ENCODE measurements at regions of chr7 and their contacts with region 1.

Region 1: DNA sequence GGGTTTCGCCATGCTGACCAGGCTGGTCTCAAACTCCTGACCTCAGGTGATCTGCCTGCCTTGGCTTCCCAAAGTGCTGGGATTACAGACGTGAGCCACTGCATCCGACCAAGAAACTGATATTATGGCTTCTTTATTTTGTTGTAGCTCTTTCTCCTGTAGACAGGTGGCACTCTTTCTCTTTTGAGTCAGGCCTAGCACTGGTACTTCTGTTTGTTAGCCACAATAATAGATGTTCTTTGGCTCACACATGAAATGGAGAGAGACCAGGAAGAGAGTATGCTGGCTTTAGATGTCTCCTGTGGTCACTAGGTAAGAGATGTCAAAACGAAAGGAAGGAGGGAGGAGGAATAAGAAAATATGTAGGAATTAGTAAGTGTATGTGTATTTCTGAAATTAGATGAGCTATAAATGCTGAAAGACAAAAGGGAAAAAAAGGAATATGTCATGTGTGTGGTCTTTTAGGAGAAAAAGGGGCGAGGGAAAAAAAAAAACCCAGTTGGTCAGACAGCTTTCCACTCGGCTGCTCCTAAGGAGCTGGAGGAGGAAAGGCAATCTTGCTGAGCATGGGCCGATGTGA is 78.7 kb downstream of the CLEC2L start:
- DNase-seq: no peak
- H3K4me3 Mint-ChIP-seq: no peak overlapping the region
- H3K27ac Mint-ChIP-seq: no peak overlapping the region
- H3K4me1 Mint-ChIP-seq: no peaks in the 10 kb centered on the region
- H3K27me3 Mint-ChIP-seq: no peaks in the 10 kb centered on the region

Region 2: DNA sequence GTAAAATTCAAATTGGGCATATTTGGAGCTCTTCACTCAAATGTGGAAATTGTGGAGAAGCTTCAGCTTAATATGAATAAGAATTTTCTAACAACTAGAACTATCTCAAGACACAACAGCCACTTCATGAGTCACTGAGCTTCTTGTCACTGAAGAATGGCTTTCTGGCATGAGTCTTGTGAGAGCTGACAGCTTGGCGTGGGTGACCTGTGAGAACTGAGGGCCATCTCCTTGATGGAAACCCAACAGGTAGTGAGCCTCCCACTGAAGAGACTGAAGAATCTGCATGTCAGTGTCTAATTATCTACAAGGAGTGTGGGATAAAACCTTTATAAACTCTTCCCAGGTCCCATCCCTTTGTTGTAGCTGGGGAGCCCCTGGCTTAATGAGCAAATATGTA is 12.8 kb before region 1 on chr7:
- CTCF ChIA-PET with region 1: interaction called, 11 read pairs
- DNase-seq: no peak
- H3K4me3 Mint-ChIP-seq: no peak overlapping the region
- H3K27ac Mint-ChIP-seq: no peak overlapping the region
- H3K4me1 Mint-ChIP-seq: no peaks in the 10 kb centered on the region
- H3K27me3 Mint-ChIP-seq: no peaks in the 10 kb centered on the region

Region 3: DNA sequence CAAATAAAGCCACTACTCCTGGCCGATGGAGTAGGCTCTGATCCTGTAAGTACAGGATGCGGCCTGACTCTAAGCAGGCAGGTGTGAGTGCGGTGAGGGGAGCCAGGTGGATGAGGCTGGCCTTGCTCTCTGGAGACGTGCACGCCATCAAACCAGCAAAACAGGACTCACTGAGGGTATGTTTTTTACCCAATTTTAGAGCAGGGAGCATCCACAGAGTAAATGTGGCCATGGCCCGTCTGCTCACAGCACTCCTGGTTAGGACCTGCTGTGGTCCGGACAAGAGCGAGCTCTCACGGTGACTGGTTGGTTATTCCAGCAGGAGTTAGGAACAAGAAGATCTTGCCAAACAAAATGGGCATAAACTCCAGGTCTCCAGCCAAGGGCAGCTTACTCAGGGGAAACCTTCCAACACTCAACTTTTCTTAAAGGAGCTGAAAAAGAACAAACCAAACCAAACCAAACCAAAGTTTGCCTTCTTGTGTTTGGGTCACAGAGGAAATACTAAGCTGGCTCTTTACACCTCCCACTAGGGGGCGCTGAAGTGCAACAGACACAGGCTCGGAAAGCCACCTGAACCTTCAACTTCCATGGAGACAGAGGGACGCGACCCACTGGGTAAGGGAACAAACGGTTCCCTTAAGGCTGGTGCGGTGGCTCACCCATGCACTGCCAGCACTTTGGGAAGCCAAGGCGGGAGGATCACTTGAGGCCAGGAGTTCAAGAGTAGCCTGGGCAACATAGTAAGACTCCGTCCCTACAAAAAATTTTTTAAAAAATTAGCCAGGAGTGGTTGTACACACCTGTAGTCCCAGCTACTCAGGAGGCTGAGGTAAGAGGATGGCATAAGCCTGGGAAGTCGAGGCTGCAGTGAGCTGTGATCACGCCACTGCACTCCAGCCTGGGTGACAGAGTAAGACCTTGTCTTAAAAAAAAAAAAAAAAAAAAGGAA is 43.6 kb after region 1 on chr7:
- CTCF ChIA-PET with region 1: interaction called, 19 read pairs
- DNase-seq: peak; percentile 89
- H3K4me3 Mint-ChIP-seq: no peak overlapping the region
- H3K27ac Mint-ChIP-seq: no peak overlapping the region
- H3K4me1 Mint-ChIP-seq: peaks cover 75% of the 10 kb centered on the region
- H3K27me3 Mint-ChIP-seq: no peaks in the 10 kb centered on the region

Region 4: GRCh38 chr7:140003913-140004382 is 401.7 kb after region 1 on chr7:
- CTCF ChIA-PET with region 1: interaction called, 29 read pairs
- DNase-seq: peak; percentile 46
- H3K4me3 Mint-ChIP-seq: no peak overlapping the region
- H3K27ac Mint-ChIP-seq: no peak overlapping the region
- H3K4me1 Mint-ChIP-seq: no peaks in the 10 kb centered on the region
- H3K27me3 Mint-ChIP-seq: no peaks in the 10 kb centered on the region

Measured in activated naive CD4-positive, alpha-beta T cell treated with anti-CD3 and anti-CD28 coated beads, Interleukin-2, amount 10 ng/mL, durations not matched to agents 7 days and 5 days (primary cell).